ENCODE measurements at regions of chr7 and their contacts with region 1.

Region 1: GRCh38 chr7:28921822-28922221 is 36.3 kb downstream of the TRIL start:
- DNase-seq: peak; percentile 84
- H3K4me3 ChIP-seq: peak overlapping the region in 1 of 2 experiments; percentile 6; a peak in 1 of 4 replicates
- H3K27ac ChIP-seq: peak overlapping the region in 1 of 2 experiments; percentile 93; a peak in 2 of 4 replicates
- H3K4me1 ChIP-seq: peaks cover 0 to 13% of the 10 kb centered on the region in 2 experiments; a peak in 3 of 4 replicates
- H3K27me3 ChIP-seq: 0 out of 2 replicates have a peak, but pooled peaks cover 15% of the 10 kb centered on the region
- CTCF ChIP-seq: peak; percentile 97
- EP300 ChIP-seq: peak in 1 of 2 experiments; percentile 77; a peak in 2 of 4 replicates
- RAD21 ChIP-seq: peak; percentile 87

Region 2: GRCh38 chr7:28890137-28890536 is 31.7 kb before region 1 on chr7:
- CTCF ChIA-PET with region 1: interaction called, 13 read pairs
- POLR2A ChIA-PET with region 1: no interaction called
- DNase-seq: no peak
- H3K4me3 ChIP-seq: no peak overlapping the region
- H3K27ac ChIP-seq: no peak overlapping the region
- H3K4me1 ChIP-seq: no peaks in the 10 kb centered on the region; a peak in 1 of 4 replicates
- H3K27me3 ChIP-seq: no peaks in the 10 kb centered on the region
- CTCF ChIP-seq: no peak
- EP300 ChIP-seq: no peak
- RAD21 ChIP-seq: no peak

Region 3: DNA sequence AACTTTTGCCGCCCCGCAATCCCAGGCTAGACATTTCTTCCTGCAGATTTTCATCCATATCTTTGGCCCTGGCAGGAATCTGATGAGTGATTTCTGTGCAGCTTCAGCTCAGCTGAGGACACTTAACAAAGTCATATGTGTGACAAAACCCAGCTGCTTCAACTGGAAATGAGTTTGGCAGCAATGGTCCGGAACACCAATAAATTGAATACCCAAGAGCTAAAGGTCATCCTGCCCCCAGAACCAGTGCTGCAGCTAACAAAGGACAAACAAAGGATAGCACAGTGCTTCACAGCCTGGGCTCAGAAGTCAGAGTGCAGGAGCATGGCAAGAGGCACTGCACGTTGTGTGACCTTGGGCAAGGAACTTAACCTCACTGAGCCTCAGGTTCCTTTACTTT is 76.3 kb after region 1 on chr7:
- CTCF ChIA-PET with region 1: interaction called, 10 read pairs
- POLR2A ChIA-PET with region 1: no interaction called
- DNase-seq: no peak
- H3K4me3 ChIP-seq: no peak overlapping the region
- H3K27ac ChIP-seq: peak overlapping the region in 1 of 2 experiments; percentile 26; a peak in 1 of 4 replicates
- H3K4me1 ChIP-seq: peaks cover 0 to 12% of the 10 kb centered on the region in 2 experiments; a peak in 1 of 4 replicates
- H3K27me3 ChIP-seq: no peaks in the 10 kb centered on the region; the same call in 1 of the 2 replicates
- CTCF ChIP-seq: no peak
- EP300 ChIP-seq: no peak
- RAD21 ChIP-seq: no peak

Region 4: GRCh38 chr7:29156907-29157452 is 235.2 kb after region 1 on chr7:
- CTCF ChIA-PET with region 1: interaction called, 36 read pairs
- POLR2A ChIA-PET with region 1: no interaction called
- DNase-seq: peak; percentile 39
- H3K4me3 ChIP-seq: no peak overlapping the region
- H3K27ac ChIP-seq: no peak overlapping the region
- H3K4me1 ChIP-seq: peaks cover 0 to 26% of the 10 kb centered on the region in 2 experiments; a peak in 2 of 4 replicates
- H3K27me3 ChIP-seq: no peaks in the 10 kb centered on the region
- CTCF ChIP-seq: no peak
- EP300 ChIP-seq: no peak
- RAD21 ChIP-seq: no peak

Region 5: GRCh38 chr7:29345600-29345999 is 423.8 kb after region 1 on chr7:
- CTCF ChIA-PET with region 1: interaction called, 93 read pairs
- POLR2A ChIA-PET with region 1: no interaction called
- DNase-seq: peak; percentile 63
- H3K4me3 ChIP-seq: no peak overlapping the region
- H3K27ac ChIP-seq: no peak overlapping the region
- H3K4me1 ChIP-seq: peaks cover 4% of the 10 kb centered on the region in 2 experiments; a peak in 1 of 4 replicates
- H3K27me3 ChIP-seq: no peaks in the 10 kb centered on the region
- CTCF ChIP-seq: peak; percentile 37
- EP300 ChIP-seq: no peak
- RAD21 ChIP-seq: peak; percentile 93

Region 6: DNA sequence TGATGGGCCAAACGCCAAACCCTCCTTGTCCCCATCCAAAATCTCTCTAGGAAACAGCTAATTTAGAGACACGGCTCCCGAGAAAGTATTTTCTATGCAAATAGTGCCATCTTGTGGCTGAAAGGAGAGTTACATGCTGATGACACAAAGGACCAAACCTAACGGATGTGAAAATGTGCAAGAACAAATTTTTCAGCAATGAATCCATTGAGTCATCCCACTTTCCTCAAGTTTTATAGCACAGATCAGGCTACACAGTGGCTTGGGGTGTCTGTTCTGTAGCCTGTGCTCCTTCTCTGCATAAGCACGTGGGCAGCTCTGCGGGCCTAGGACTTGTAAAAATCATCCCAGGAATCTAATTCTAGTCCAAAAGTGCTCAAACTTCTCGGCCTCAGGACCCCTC is 487.0 kb after region 1 on chr7:
- CTCF ChIA-PET with region 1: interaction called, 372 read pairs
- POLR2A ChIA-PET with region 1: interaction called, 4 read pairs
- DNase-seq: peak; percentile 76
- H3K4me3 ChIP-seq: no peak overlapping the region
- H3K27ac ChIP-seq: no peak overlapping the region
- H3K4me1 ChIP-seq: no peaks in the 10 kb centered on the region; a peak in 1 of 4 replicates
- H3K27me3 ChIP-seq: 0 out of 2 replicates have a peak, but pooled peaks cover 4% of the 10 kb centered on the region
- CTCF ChIP-seq: peak; percentile 97
- EP300 ChIP-seq: no peak
- RAD21 ChIP-seq: peak; percentile 99